ENCODE measurements at regions of chr6 and their contacts with region 1.

Region 1: GRCh38 chr6:14660806-14661579 is 543.4 kb downstream of the CD83 start:
- DNase-seq: peak; percentile 66
- ATAC-seq: peak; percentile 76
- H3K4me3 Mint-ChIP-seq: no peak overlapping the region
- H3K27ac Mint-ChIP-seq: no peak overlapping the region
- H3K4me1 Mint-ChIP-seq: peaks cover 22% of the 10 kb centered on the region
- H3K27me3 Mint-ChIP-seq: no peaks in the 10 kb centered on the region

Region 2: DNA sequence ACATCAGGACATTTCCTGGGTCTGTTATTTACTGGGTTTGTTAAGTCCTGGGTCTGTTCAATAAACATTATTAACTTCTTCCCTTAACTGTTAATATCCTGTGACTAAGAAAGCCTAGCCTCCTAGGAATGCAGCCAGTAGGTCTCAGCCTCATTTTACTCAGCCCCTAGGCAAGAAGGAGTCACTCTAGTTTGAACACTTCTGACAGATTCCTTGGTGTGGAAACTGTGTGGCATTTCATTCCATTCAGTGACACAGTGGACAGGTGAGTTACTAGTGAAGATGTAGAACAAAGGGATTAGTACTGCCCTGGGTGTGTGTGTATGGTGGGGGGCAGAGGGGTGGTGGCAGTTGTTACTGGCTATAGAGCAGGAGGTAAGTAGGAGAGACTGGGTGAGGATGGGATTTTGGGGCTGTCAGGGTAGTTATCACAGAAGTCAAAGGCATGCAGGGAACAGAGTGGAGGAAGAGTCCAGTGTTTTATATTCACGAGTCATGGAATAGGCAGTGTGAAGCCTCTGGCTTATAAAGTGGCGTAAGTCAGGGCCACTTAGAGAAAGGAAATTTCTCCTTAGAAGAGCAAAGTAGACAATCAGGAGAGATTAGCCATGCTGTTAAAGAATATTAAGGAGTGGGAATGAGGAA is 707.8 kb before region 1 on chr6:
- CTCF ChIA-PET with region 1: no interaction called
- POLR2A ChIA-PET with region 1: no interaction called
- intact Hi-C with region 1: no loop called
- DNase-seq: no peak
- ATAC-seq: no peak
- H3K4me3 Mint-ChIP-seq: no peak overlapping the region
- H3K27ac Mint-ChIP-seq: no peak overlapping the region
- H3K4me1 Mint-ChIP-seq: no peaks in the 10 kb centered on the region
- H3K27me3 Mint-ChIP-seq: peaks cover 5% of the 10 kb centered on the region

Region 3: GRCh38 chr6:14476793-14477531 is 184.0 kb before region 1 on chr6:
- CTCF ChIA-PET with region 1: no interaction called
- POLR2A ChIA-PET with region 1: no interaction called
- intact Hi-C with region 1: no loop called
- DNase-seq: no peak
- ATAC-seq: no peak
- H3K4me3 Mint-ChIP-seq: no peak overlapping the region
- H3K27ac Mint-ChIP-seq: no peak overlapping the region
- H3K4me1 Mint-ChIP-seq: peaks cover 10% of the 10 kb centered on the region
- H3K27me3 Mint-ChIP-seq: no peaks in the 10 kb centered on the region

Region 4: DNA sequence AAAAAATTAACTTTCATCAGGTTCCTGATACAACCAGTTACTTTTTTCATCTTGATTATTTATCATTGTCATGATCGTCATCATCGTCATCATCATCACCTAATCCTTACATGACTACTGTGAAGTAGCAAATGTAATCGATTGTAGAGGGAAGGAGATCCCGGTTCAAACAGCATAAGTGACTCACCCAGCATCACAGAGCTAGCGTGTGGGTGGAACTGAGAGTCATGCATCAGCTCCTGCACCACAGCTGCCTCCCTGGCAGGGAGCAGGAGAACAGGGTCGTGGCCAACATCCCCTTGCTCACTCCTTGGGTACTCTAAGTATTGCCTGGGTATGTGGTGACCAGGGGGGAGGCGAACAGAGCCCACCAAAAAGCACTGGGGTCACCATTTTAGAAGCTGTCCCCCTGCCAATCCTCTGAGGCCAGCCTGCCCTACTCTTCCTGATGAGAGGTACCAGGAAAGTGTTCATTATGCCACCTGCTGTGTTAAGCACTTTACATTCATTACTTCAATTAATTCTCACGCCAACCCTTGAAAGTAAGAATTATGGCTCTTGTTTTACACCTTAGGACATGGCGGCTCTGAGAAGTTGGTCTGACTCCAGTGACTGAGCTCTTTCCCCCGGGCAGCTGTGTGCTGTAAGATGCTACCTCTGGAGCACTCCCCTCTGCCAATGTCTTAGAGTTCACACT is 118.2 kb before region 1 on chr6:
- CTCF ChIA-PET with region 1: no interaction called
- POLR2A ChIA-PET with region 1: no interaction called
- intact Hi-C with region 1: loop called in 1 of 2 experiments (anchors 5 kb)
- DNase-seq: peak; percentile 90
- ATAC-seq: peak; percentile 99
- H3K4me3 Mint-ChIP-seq: no peak overlapping the region
- H3K27ac Mint-ChIP-seq: peak overlapping the region; percentile 79
- H3K4me1 Mint-ChIP-seq: peaks cover 41% of the 10 kb centered on the region
- H3K27me3 Mint-ChIP-seq: peaks cover 2% of the 10 kb centered on the region

Region 5: GRCh38 chr6:14638906-14639761 is 21.9 kb before region 1 on chr6:
- CTCF ChIA-PET with region 1: interaction called, 6 read pairs
- POLR2A ChIA-PET with region 1: interaction called, 4 read pairs
- intact Hi-C with region 1: loop called in 1 of 2 experiments (anchors 2 kb)
- DNase-seq: no peak
- ATAC-seq: no peak
- H3K4me3 Mint-ChIP-seq: no peak overlapping the region
- H3K27ac Mint-ChIP-seq: peak overlapping the region; percentile 56
- H3K4me1 Mint-ChIP-seq: peaks cover 65% of the 10 kb centered on the region
- H3K27me3 Mint-ChIP-seq: no peaks in the 10 kb centered on the region

Region 6: DNA sequence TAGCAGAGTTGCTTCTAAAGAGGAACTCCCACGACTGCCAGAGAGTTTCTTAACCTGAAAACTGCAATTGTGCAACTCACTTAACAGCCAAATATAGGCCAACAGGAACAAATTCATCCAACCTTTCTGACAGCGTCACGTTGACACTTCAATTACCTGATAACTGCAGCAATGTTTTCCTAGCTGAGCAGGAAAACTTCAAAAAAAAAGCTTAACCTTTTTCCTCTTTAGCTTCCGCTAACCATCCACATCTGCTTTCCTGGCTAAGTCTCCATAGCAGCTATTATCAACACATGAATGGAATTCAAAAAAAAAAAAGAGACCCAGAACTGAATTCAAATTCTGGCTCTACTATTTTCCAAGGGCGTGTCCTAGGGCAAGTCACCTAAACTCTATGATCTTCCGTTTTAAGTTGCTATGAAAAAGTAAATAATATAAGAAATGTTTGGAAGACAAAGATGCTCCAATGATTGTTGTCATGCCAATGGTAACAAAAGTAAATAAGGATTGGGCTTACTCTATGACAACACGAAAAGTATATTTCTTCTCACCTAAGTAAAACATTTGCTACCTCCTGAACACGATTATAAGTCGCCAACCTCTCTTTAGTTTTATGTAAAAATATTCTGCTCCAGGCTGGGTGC is 60.2 kb after region 1 on chr6:
- CTCF ChIA-PET with region 1: no interaction called
- POLR2A ChIA-PET with region 1: no interaction called
- intact Hi-C with region 1: no loop called
- DNase-seq: no peak
- ATAC-seq: peak; percentile 13
- H3K4me3 Mint-ChIP-seq: no peak overlapping the region
- H3K27ac Mint-ChIP-seq: peak overlapping the region; percentile 52
- H3K4me1 Mint-ChIP-seq: peaks cover 52% of the 10 kb centered on the region
- H3K27me3 Mint-ChIP-seq: no peaks in the 10 kb centered on the region

Measured in activated CD4-positive, alpha-beta T cell treated with anti-CD3 and anti-CD28 coated beads for 36 hours (primary cell).